ENCODE measurements at regions of chr18 and their contacts with region 1.

Region 1: DNA sequence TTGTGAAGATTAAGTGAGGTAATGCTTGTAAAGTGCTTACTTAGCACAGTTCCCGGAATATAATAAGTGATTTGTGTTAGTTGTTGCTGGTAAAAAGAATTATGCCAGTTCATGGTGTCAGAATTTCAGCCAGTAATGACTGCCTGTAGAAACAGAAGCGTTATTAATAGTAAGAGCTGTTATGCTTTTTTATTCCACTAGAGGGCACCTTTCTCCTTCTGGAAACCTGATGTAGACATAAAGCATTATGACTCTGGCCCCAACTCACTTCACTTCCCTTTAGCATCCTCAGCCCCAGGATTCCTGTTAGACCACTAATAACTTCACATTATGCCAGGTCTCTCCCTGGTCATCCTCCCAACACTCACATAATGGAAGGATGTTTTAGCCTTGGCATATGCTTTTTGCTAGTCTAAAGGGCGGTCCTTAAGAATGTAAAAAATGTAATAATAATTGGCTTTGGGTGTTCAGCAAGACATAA is 34.9 kb downstream of the C18orf54 start:
- DNase-seq: no peak
- ATAC-seq: peak in 2 of 8 donors; percentile 34 to 35
- H3K4me3 ChIP-seq: no peak overlapping the region
- H3K27ac ChIP-seq: no peak overlapping the region
- H3K4me1 ChIP-seq: peaks cover 0 to 7% (median 0%) of the 10 kb centered on the region in 9 donors
- H3K27me3 ChIP-seq: no peaks in the 10 kb centered on the region
- CTCF ChIP-seq: peak; percentile 56 to 78 (median 73)

Region 2: DNA sequence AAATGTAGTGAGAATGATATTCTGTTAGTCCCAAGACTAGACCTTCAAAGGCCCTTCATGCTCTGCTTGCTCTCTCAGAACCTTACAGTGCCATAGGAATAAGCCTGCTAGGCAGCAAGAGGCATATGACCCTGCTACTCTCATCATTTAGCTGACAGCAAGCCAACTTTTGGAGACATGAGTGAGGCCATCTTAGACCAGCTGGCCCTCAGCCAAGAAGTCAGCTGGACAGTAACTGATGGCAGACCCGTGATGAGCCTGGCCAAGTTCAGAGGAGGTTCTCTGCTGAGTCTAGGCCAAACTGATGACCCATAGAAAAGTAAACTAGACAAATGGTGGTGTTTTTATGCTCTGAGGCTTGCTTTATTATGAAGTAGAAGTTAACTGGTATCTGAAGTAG is 47.7 kb after region 1 on chr18:
- intact Hi-C with region 1: no loop called
- DNase-seq: no peak
- ATAC-seq: no peak
- H3K4me3 ChIP-seq: no peak overlapping the region
- H3K27ac ChIP-seq: no peak overlapping the region
- H3K4me1 ChIP-seq: no peaks in the 10 kb centered on the region
- H3K27me3 ChIP-seq: peaks cover 0 to 13% (median 5%) of the 10 kb centered on the region in 7 donors
- CTCF ChIP-seq: no peak

Region 3: DNA sequence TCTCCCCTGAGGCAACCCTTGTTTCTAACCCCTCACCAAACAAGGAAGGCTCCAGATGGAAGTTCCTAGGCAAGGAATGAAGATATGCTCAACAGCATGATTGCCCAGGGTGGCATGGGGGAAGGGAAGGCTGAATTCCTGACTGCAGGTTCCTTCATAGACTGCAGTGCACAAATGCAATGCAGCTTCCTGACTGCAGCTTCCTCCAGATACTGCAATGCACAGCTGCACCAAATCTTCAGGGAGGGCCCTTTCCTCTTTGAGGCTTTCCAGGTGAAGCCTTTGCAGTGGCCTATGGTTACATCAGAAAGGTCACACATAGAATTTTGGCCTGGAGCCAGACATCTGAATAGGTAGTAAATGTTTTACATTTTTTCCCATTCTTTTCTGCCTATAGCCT is 139.6 kb after region 1 on chr18:
- intact Hi-C with region 1: no loop called
- DNase-seq: no peak
- ATAC-seq: no peak
- H3K4me3 ChIP-seq: no peak overlapping the region
- H3K27ac ChIP-seq: no peak overlapping the region
- H3K4me1 ChIP-seq: no peaks in the 10 kb centered on the region
- H3K27me3 ChIP-seq: peaks cover 0 to 5% (median 0%) of the 10 kb centered on the region in 7 donors
- CTCF ChIP-seq: no peak

Region 4: DNA sequence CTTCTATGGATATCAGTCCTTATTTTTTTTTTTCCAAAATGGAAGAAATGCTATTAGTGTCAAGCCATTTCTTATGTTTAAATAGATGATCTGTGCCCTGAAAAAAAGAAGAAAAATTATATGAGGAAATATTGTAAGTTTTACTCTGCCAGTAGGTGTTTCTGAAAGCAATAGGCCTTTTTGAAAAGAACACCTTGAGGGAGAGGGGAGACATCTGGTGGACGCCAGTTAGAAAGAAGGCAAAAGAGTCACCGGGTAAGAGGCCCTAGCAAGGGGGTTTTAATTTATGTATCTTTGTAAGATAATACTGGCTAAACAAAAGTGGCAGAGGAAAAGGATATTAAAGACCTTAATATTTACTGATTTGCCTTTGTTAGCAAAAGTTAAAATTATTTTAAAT is 254.6 kb after region 1 on chr18:
- intact Hi-C with region 1: loop called in 1 of 10 experiments (anchors 10 kb)
- DNase-seq: no peak
- ATAC-seq: no peak
- H3K4me3 ChIP-seq: no peak overlapping the region
- H3K27ac ChIP-seq: no peak overlapping the region
- H3K4me1 ChIP-seq: no peaks in the 10 kb centered on the region
- H3K27me3 ChIP-seq: peaks cover 0 to 12% (median 0%) of the 10 kb centered on the region in 7 donors
- CTCF ChIP-seq: peak in 2 of 9 donors; percentile 6 to 15

Region 5: GRCh38 chr18:54671291-54671881 is 278.8 kb after region 1 on chr18:
- intact Hi-C with region 1: loop called in 4 of 10 experiments (anchors 5 to 10 kb)
- DNase-seq: no peak
- ATAC-seq: no peak
- H3K4me3 ChIP-seq: no peak overlapping the region
- H3K27ac ChIP-seq: no peak overlapping the region
- H3K4me1 ChIP-seq: no peaks in the 10 kb centered on the region
- H3K27me3 ChIP-seq: no peaks in the 10 kb centered on the region
- CTCF ChIP-seq: peak; percentile 31 to 73 (median 62)

Region 6: GRCh38 chr18:54679318-54680149 is 287.0 kb after region 1 on chr18:
- intact Hi-C with region 1: loop called in 4 of 10 experiments (anchors 5 to 10 kb)
- DNase-seq: peak in 1 of 2 donors; percentile 14
- ATAC-seq: peak in 4 of 8 donors; percentile 35 to 61 (median 54)
- H3K4me3 ChIP-seq: no peak overlapping the region
- H3K27ac ChIP-seq: no peak overlapping the region
- H3K4me1 ChIP-seq: peaks cover 0 to 3% (median 0%) of the 10 kb centered on the region in 9 donors
- H3K27me3 ChIP-seq: no peaks in the 10 kb centered on the region
- CTCF ChIP-seq: peak in 8 of 9 donors; percentile 29 to 60 (median 48)

Region 7: GRCh38 chr18:54983041-54983686 is 590.6 kb after region 1 on chr18:
- intact Hi-C with region 1: loop called in 1 of 10 experiments (anchors 5 kb)
- DNase-seq: peak in 1 of 2 donors; percentile 12
- ATAC-seq: peak in 6 of 8 donors; percentile 52 to 70 (median 62)
- H3K4me3 ChIP-seq: no peak overlapping the region
- H3K27ac ChIP-seq: no peak overlapping the region
- H3K4me1 ChIP-seq: no peaks in the 10 kb centered on the region
- H3K27me3 ChIP-seq: no peaks in the 10 kb centered on the region
- CTCF ChIP-seq: peak; percentile 48 to 84 (median 75)